Activated naive CD4-positive, alpha-beta T cell treated with anti-CD3 and anti-CD28 coated beads for 36 hours (primary cell): ENCODE measurements at regions of chr6 and their contacts with region 1.

Region 1: DNA sequence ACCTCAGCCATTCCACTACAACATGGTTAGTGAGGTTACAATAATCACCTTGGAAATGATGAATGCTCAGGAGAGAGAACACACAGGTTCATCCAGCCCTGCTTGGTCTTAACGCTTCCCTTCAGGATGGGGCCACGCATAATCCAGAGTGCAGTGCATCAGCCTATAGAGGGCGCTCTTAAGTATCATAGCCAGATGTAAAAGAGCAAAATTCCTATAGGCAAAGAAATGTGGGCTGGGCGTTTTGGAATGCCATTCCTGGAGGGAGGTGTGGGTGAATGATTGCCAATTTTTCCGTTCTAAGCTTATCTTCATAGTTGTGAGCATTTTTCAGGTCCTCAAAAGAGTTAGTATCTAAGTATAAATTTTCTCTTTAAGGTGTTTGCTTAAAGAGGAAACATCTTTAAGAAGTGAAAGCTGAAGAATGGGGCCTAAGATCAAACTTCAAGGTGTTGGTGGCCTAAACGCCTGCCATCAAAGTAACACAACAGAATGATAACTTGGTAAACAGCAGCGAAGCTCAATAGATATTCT is 1.8 kb downstream of the RIPOR2 start:
- DNase-seq: peak; percentile 67
- H3K4me3 Mint-ChIP-seq: peak overlapping the region; percentile 96
- H3K27ac Mint-ChIP-seq: peak overlapping the region; percentile 96
- H3K4me1 Mint-ChIP-seq: peaks cover 73% of the 10 kb centered on the region
- H3K27me3 Mint-ChIP-seq: no peaks in the 10 kb centered on the region

Region 2: GRCh38 chr6:24614043-24614420 is 319.9 kb before region 1 on chr6:
- CTCF ChIA-PET with region 1: no interaction called
- intact Hi-C with region 1: no loop called
- DNase-seq: no peak
- H3K4me3 Mint-ChIP-seq: no peak overlapping the region
- H3K27ac Mint-ChIP-seq: no peak overlapping the region
- H3K4me1 Mint-ChIP-seq: no peaks in the 10 kb centered on the region
- H3K27me3 Mint-ChIP-seq: peaks cover 5% of the 10 kb centered on the region

Region 3: DNA sequence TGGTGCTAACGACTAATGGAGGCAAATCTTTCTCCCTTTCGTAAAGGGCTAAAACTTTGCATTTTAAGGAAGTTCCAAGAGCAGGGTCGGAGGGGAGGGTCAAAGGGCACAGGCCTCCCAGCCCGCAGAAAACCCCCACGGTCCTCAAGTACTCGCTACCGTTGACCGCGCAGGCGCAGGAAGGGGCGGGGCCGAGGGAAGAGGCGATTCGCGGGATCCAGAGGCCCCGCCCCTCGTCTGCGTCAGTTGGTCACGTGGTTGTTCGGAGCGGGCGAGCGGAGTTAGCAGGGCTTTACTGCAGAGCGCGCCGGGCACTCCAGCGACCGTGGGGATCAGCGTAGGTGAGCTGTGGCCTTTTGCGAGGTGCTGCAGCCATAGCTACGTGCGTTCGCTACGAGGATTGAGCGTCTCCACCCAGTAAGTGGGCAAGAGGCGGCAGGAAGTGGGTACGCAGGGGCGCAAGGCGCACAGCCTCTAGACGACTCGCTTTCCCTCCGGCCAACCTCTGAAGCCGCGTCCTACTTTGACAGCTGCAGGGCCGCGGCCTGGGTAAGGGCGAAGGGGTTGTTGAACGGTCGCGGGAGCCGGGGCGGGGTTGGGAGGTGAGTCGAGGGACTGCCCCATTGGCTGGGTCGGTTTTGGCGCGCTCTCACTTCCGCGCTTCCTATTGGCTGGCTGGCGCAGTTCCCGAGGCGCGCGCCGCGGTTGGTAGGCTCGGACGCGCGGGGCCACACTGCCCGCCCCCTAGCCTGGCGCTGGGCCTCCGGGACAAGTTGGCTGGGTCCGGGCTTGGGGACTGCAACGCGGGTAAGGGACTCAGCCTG is 159.0 kb before region 1 on chr6 and contains the start of gene GMNN:
- CTCF ChIA-PET with region 1: no interaction called
- intact Hi-C with region 1: loop called (anchors 2 kb)
- DNase-seq: peak; percentile 99
- H3K4me3 Mint-ChIP-seq: peak within 1 kb of the TSS; percentile 96
- H3K27ac Mint-ChIP-seq: peak within 1 kb of the TSS; percentile 98
- H3K4me1 Mint-ChIP-seq: peaks cover 30% of the 10 kb centered on the region
- H3K27me3 Mint-ChIP-seq: no peaks in the 10 kb centered on the region
- total RNA-seq, gene GMNN: 84.9 to 85.1 TPM

Region 4: GRCh38 chr6:24891004-24891403 is 42.9 kb before region 1 on chr6:
- CTCF ChIA-PET with region 1: interaction called, 25 read pairs
- intact Hi-C with region 1: no loop called
- DNase-seq: peak; percentile 31
- H3K4me3 Mint-ChIP-seq: peak overlapping the region; percentile 25
- H3K27ac Mint-ChIP-seq: peak overlapping the region; percentile 90
- H3K4me1 Mint-ChIP-seq: peaks cover 91% of the 10 kb centered on the region
- H3K27me3 Mint-ChIP-seq: no peaks in the 10 kb centered on the region

Region 5: GRCh38 chr6:24949020-24949569 is 15.2 kb after region 1 on chr6:
- CTCF ChIA-PET with region 1: interaction called, 64 read pairs
- intact Hi-C with region 1: loop called (anchors 1 kb)
- DNase-seq: peak; percentile 51
- H3K4me3 Mint-ChIP-seq: peak overlapping the region; percentile 61
- H3K27ac Mint-ChIP-seq: peak overlapping the region; percentile 89
- H3K4me1 Mint-ChIP-seq: peaks cover 63% of the 10 kb centered on the region
- H3K27me3 Mint-ChIP-seq: no peaks in the 10 kb centered on the region

Region 6: GRCh38 chr6:24991810-24992467 is 58.0 kb after region 1 on chr6:
- CTCF ChIA-PET with region 1: interaction called, 168 read pairs
- intact Hi-C with region 1: loop called (anchors 1 kb)
- DNase-seq: peak; percentile 89
- H3K4me3 Mint-ChIP-seq: peak overlapping the region; percentile 37
- H3K27ac Mint-ChIP-seq: peak overlapping the region; percentile 86
- H3K4me1 Mint-ChIP-seq: peaks cover 68% of the 10 kb centered on the region
- H3K27me3 Mint-ChIP-seq: no peaks in the 10 kb centered on the region

Region 7: GRCh38 chr6:25070547-25071366 is 136.8 kb after region 1 on chr6:
- CTCF ChIA-PET with region 1: interaction called, 3 read pairs
- intact Hi-C with region 1: loop called (anchors 2 kb)
- DNase-seq: peak; percentile 91
- H3K4me3 Mint-ChIP-seq: peak overlapping the region; percentile 38
- H3K27ac Mint-ChIP-seq: peak overlapping the region; percentile 70
- H3K4me1 Mint-ChIP-seq: peaks cover 10% of the 10 kb centered on the region
- H3K27me3 Mint-ChIP-seq: no peaks in the 10 kb centered on the region

Region 8: DNA sequence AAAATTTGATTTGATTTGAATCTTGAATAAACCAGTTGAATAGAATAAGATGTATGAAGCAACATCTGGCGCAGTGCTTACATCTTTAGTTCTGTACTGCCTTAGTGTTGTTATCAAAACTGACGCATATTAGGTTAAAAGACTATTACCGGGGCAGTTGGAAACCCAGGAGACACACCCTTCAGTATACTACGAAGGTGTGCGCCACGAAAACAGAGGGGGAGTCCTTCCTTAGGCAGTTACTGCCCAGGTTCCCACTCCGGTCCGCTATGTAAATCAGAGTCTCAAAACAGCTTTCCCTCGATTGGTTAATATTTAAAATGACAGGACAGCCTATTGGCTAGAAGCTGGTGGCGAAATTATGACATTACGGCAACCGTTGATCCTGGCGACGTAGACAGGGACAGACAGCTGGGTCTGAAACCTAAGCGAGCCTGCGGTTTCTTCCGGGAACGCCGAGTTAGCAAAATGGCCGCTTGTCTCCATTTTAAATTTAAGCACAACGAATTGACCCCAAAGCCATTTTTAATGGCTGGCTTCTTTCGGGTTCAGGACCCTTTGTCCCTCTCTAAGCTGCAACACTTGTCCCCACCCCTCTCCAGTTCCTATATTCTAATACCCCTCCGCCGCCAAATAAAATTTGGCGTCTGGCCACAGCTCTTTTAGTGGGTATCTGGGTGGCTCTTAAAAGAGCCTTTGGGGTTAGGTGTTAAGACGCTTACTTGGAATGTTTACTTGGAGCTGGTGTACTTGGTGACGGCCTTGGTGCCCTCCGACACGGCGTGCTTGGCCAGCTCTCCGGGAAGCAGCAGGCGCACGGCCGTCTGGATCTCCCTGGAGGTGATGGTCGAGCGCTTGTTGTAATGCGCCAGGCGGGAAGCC is 1189.1 kb after region 1 on chr6:
- CTCF ChIA-PET with region 1: no interaction called
- intact Hi-C with region 1: loop called (anchors 10 kb)
- DNase-seq: peak; percentile 98
- H3K4me3 Mint-ChIP-seq: peak overlapping the region; percentile 97
- H3K27ac Mint-ChIP-seq: peak overlapping the region; percentile 99
- H3K4me1 Mint-ChIP-seq: peaks cover 36% of the 10 kb centered on the region
- H3K27me3 Mint-ChIP-seq: peaks cover 6% of the 10 kb centered on the region